A673 (cell line): ENCODE measurements at regions of chr1 and their contacts with region 1.

Region 1: DNA sequence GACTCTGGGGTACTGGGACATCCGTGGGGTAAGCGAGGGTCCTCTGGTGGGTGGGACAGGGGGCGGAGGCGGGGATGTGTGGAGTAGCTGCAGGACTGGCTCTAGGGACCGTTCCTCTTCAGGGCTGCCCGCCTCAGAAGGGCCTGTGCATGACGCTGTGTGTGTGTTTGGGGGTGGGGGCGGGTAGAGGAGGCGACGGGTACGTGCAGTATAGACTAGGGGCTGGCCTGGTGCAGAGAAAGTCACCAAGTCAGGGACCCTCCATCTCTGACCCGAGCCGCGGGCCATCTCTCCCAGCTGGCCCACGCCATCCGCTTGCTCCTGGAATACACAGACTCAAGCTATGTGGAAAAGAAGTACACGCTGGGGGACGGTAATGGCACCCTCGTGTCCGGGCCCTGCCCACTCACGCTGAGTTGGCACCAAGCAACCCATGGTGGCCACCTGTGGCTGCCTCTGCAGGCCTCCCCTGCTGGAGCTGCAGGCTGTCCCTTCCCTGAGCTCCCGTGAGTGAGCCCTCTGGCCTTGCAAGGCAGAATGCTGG is 342 bp downstream of the GSTM5 start:
- DNase-seq: no peak
- H3K4me3 ChIP-seq: no peak overlapping the region
- H3K27ac ChIP-seq: no peak overlapping the region
- H3K4me1 ChIP-seq: no peaks in the 10 kb centered on the region
- H3K27me3 ChIP-seq: no peaks in the 10 kb centered on the region
- CTCF ChIP-seq: no peak

Region 2: GRCh38 chr1:109567877-109568672 is 144.3 kb before region 1 on chr1:
- CTCF ChIA-PET with region 1: no interaction called
- POLR2A ChIA-PET with region 1: no interaction called
- intact Hi-C with region 1: no loop called
- DNase-seq: no peak
- H3K4me3 ChIP-seq: no peak overlapping the region
- H3K27ac ChIP-seq: no peak overlapping the region
- H3K4me1 ChIP-seq: peaks cover 20% of the 10 kb centered on the region
- H3K27me3 ChIP-seq: no peaks in the 10 kb centered on the region
- CTCF ChIP-seq: no peak

Region 3: DNA sequence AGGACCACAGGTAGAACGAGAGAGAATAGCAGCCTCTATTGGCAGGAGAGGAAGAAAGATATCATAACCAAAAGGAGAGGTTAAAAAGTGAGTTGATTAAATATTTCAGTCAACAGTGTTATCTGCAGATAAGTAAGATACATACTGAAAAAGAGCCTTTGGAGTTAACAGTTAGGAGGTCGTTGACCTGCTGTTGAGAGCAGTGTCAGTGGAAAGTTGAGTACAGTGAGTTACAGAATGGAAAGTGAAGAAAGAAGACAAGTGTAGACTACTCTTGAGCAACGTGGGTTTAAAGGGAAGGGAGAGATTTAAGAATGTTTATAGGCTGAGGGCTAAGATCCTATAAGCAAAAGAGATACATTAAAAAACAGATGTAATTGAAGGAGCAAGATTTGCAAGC is 123.2 kb before region 1 on chr1:
- CTCF ChIA-PET with region 1: no interaction called
- POLR2A ChIA-PET with region 1: no interaction called
- intact Hi-C with region 1: no loop called
- DNase-seq: no peak
- H3K4me3 ChIP-seq: no peak overlapping the region
- H3K27ac ChIP-seq: no peak overlapping the region
- H3K4me1 ChIP-seq: no peaks in the 10 kb centered on the region
- H3K27me3 ChIP-seq: no peaks in the 10 kb centered on the region
- CTCF ChIP-seq: no peak

Region 4: GRCh38 chr1:109655601-109656519 is 56.5 kb before region 1 on chr1 and contains the start of gene GSTM4:
- CTCF ChIA-PET with region 1: no interaction called
- POLR2A ChIA-PET with region 1: no interaction called
- intact Hi-C with region 1: no loop called
- DNase-seq: peak; percentile 95
- H3K4me3 ChIP-seq: peak within 1 kb of the TSS; percentile 97
- H3K27ac ChIP-seq: peak within 1 kb of the TSS; percentile 93
- H3K4me1 ChIP-seq: peaks cover 37% of the 10 kb centered on the region
- H3K27me3 ChIP-seq: no peaks in the 10 kb centered on the region
- CTCF ChIP-seq: no peak
- total RNA-seq, gene GSTM4: 173 and 188 TPM in 2 replicates

Region 5: DNA sequence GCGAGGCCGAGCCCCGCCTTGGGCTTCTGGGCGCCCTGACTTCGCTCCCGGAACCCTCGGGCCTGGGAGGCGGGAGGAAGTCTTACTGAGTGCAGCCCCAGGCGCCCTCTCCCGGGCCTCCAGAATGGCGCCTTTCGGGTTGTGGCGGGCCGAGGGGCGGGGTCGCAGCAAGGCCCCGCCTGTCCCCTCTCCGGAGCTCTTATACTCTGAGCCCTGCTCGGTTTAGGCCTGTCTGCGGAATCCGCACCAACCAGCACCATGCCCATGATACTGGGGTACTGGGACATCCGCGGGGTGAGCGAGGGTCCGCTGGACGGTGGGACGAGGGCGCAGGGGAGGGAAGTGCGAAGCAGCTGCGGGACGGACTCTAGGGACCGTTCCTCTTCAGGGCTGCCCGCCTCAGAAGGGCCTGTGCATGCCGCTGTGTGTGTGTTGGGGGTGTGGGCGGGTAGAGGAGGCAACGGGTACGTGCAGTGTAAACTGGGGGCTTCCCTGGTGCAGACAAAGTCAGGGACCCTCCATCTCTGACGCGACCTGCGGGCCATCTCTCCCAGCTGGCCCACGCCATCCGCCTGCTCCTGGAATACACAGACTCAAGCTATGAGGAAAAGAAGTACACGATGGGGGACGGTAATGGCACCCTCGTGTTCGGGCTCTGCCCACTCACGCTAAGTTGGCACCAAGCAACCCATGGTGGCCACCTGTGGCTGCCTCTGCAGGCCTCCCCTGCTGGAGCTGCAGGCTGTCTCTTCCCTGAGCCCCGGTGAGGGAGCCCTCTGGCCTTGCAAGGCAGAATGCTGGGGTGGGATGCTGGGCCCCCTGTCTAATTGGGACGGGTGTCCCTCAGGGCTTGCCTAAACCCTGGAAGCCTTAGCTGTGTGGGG is 24.5 kb before region 1 on chr1 and contains the start of gene GSTM1:
- CTCF ChIA-PET with region 1: interaction called, 8 read pairs
- POLR2A ChIA-PET with region 1: interaction called, 16 read pairs
- intact Hi-C with region 1: no loop called
- DNase-seq: peak; percentile 91
- H3K4me3 ChIP-seq: peak within 1 kb of the TSS; percentile 64
- H3K27ac ChIP-seq: peak within 1 kb of the TSS; percentile 82
- H3K4me1 ChIP-seq: no peaks in the 10 kb centered on the region
- H3K27me3 ChIP-seq: no peaks in the 10 kb centered on the region
- CTCF ChIP-seq: peak; percentile 55
- total RNA-seq, gene GSTM1: 166 TPM in 2 replicates